Head of caudate nucleus (tissue), 42 donors: ENCODE measurements at regions of chr18 and their contacts with region 1.

Region 1: GRCh38 chr18:3703732-3704176 is 253.8 kb downstream of the TGIF1 start:
- DNase-seq: peak; percentile 53 to 87 (median 74)

Region 2: DNA sequence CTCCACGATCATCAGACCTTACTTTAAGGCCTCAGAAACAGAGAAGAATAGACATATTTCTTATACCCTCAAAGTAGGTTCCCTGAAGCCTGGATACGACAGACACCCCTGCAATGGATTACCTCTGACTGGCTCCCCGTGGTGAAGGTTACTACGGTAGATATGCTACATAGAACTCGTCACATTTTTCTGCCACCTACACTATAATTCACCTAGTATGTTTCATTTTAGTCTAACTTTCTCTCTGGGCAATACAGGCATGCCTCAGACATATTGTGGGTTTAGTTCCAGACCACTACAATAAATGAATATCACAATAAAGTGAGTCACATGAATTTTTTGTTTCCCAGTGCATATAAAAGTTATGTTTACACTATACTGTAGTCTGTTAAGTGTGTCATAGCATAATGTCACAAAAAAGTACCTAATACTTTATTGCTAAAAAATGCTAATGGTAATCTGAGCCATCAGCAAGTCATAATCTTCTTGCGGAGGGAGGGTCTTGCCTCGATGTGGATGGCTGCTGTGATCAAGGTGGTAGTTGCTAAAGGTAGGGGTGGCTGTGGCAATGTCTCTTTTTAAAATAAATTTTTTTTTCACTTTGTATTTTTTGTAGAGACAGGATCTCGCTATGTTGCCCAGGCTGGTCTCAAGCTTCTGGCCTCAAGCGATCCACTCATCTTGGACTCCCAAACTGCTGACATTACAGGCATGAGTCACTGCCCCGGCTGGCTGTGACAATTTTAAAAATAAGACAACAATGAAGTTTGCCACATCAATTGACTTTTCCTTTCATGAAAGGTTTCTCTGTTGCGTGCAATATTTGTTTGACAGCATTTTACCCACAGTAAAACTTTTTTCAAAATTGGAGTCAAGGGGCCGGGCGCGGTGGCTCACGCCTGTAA is 189.2 kb before region 1 on chr18:
- intact Hi-C with region 1: no loop called
- DNase-seq: no peak

Region 3: DNA sequence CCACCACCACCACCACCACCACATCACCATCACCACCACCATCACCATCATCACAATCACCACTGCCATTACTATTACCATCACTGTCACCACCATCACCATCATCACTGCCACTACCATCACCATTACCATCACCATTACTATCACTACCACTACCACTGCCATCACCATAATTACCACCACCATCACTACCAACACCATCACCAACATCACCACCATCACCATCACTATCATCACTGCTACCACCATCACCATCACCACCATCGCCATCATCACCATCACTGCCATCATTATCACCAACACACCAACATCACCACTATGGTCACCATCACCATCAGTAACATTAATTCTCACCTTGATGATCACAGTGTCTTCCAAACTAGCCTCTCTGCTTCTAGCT is 37.6 kb after region 1 on chr18:
- intact Hi-C with region 1: no loop called
- DNase-seq: no peak

Region 4: GRCh38 chr18:4004183-4004829 is 300.6 kb after region 1 on chr18:
- intact Hi-C with region 1: loop called (anchors 10 kb)
- DNase-seq: no peak